OCI-LY7 (cell line): ENCODE measurements at regions of chr5 and their contacts with region 1.

Region 1: GRCh38 chr5:181223058-181223728 is at the start of gene TRIM41:
- DNase-seq: peak; percentile 99
- H3K4me3 ChIP-seq: peak within 1 kb of the TSS; percentile 86
- H3K27ac ChIP-seq: peak within 1 kb of the TSS; percentile 97
- H3K4me1 ChIP-seq: peaks cover 47% of the 10 kb centered on the region
- CTCF ChIP-seq: 0 out of 2 replicates have a peak, but pooled peaks have one; percentile 24
- total RNA-seq, gene TRIM41: 30.2 and 30.4 TPM in 2 replicates

Region 2: GRCh38 chr5:180802325-180803180 is 420.6 kb before region 1 on chr5 and contains the start of gene MGAT1:
- CTCF ChIA-PET with region 1: no interaction called
- POLR2A ChIA-PET with region 1: no interaction called
- intact Hi-C with region 1: loop called (anchors 2 kb)
- DNase-seq: peak; percentile 75
- H3K4me3 ChIP-seq: peak within 1 kb of the TSS; percentile 84
- H3K27ac ChIP-seq: peak within 1 kb of the TSS; percentile 96
- H3K4me1 ChIP-seq: peaks cover 80% of the 10 kb centered on the region
- CTCF ChIP-seq: no peak
- total RNA-seq, gene MGAT1: 65.2 and 75.4 TPM in 2 replicates

Region 3: DNA sequence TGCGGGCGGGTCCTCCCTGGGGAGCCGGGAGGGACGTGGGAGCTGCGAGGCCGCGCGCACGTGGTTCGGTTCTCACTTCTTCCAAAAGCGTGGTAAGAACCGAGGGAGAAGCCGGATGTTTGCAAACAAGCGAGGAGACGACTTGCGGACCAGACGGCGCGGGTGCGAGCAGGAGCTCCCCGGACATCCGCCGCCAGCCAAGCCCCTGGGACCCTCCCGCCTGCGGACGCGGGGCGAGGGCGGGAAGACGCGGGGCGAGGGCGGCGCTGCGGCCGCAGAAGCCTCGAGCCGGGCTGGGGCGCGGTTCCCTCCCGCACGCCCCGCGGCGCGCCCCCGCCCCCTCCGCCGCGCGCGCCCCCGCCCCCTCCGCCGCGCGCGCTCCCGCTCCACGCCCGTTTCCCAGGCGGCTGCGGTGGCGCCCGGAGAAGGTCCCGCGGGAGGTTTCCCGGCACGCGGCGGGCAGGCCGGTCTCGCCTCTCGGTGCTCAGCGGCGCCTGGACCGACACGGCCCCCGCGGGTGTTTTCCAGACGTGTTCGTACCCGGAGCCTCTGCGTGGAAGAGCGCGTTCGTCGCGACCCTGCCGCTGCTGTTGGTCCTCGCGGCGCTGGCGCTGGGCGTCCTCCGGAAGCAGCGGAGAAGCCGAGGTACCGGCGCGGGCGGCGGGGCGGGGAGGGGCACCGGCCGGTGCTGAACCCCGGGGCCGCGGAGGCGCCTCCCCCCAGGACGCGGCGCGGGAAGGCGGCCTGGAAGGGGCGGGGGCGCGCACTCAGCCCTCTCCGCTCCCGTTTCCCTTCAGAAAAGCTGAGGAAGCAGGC is 170.3 kb before region 1 on chr5:
- CTCF ChIA-PET with region 1: no interaction called
- POLR2A ChIA-PET with region 1: no interaction called
- intact Hi-C with region 1: loop called (anchors 2 kb)
- DNase-seq: peak; percentile 86
- H3K4me3 ChIP-seq: peak overlapping the region; percentile 84
- H3K27ac ChIP-seq: peak overlapping the region; percentile 99
- H3K4me1 ChIP-seq: peaks cover 76% of the 10 kb centered on the region
- CTCF ChIP-seq: no peak

Region 4: DNA sequence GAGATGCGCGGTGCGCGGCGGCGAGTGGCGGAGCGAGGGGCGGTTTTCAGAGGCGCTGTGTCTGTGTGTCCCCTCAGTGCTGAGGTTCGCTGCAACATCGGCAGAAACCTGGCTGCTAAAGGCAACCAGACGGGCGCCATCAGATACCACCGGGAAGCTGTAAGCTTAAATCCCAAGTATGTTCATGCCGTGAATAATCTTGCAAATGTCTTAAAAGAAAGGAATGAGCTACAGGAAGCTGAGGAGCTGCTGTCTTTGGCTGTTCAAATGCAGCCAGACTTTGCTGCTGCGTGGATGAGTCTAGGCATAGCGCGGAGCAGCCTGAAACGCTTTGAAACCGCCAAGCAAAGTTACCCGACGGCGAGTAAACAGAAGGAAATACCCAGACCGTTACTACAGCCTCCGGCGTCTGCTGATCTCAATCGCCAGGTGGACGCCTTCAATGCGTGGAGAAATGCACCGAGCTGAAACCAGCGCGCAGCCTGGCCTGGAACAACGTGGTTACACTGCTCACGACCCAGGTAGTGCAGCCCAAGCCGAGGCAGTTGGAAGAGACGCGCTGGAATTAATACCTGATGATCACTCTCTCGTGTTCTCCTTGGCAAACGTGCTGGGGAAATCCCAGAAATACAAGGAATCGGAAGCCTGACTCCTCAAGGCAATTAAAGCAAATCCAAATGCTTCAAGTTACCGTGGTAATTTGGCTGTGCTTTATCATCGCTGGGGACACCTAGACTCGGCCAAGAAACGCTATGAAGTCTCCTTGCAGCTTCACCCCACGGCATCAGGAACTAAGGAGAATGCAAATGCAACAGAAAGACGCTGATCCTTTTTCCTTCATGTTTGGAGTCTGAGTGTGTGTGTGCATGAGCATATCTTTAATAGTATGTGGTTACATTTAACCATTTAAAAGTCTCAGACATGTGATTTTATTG is 108.1 kb before region 1 on chr5:
- CTCF ChIA-PET with region 1: no interaction called
- POLR2A ChIA-PET with region 1: no interaction called
- intact Hi-C with region 1: no loop called
- DNase-seq: no peak
- H3K4me3 ChIP-seq: no peak overlapping the region
- H3K27ac ChIP-seq: no peak overlapping the region
- H3K4me1 ChIP-seq: no peaks in the 10 kb centered on the region
- CTCF ChIP-seq: no peak

Region 5: GRCh38 chr5:181152406-181152805 is 70.8 kb before region 1 on chr5:
- CTCF ChIA-PET with region 1: no interaction called
- POLR2A ChIA-PET with region 1: no interaction called
- intact Hi-C with region 1: no loop called
- DNase-seq: no peak
- H3K4me3 ChIP-seq: no peak overlapping the region
- H3K27ac ChIP-seq: no peak overlapping the region
- H3K4me1 ChIP-seq: peaks cover 25% of the 10 kb centered on the region
- CTCF ChIP-seq: no peak

Region 6: GRCh38 chr5:181184857-181185251 is 38.3 kb before region 1 on chr5:
- CTCF ChIA-PET with region 1: interaction called, 8 read pairs
- POLR2A ChIA-PET with region 1: interaction called, 11 read pairs
- intact Hi-C with region 1: no loop called
- DNase-seq: no peak
- H3K4me3 ChIP-seq: peak overlapping the region; percentile 70
- H3K27ac ChIP-seq: peak overlapping the region; percentile 70
- H3K4me1 ChIP-seq: peaks cover 38% of the 10 kb centered on the region
- CTCF ChIP-seq: no peak

Region 7: GRCh38 chr5:181207214-181208107 is 15.7 kb before region 1 on chr5:
- CTCF ChIA-PET with region 1: interaction called, 5 read pairs
- POLR2A ChIA-PET with region 1: interaction called, 7 read pairs
- intact Hi-C with region 1: loop called (anchors 1 kb)
- DNase-seq: peak; percentile 87
- H3K4me3 ChIP-seq: peak overlapping the region; percentile 79
- H3K27ac ChIP-seq: peak overlapping the region; percentile 59
- H3K4me1 ChIP-seq: peaks cover 29% of the 10 kb centered on the region
- CTCF ChIP-seq: no peak

Region 8: GRCh38 chr5:181260387-181261319 is 37.5 kb after region 1 on chr5 and contains the start of gene TRIM52:
- CTCF ChIA-PET with region 1: no interaction called
- POLR2A ChIA-PET with region 1: interaction called, 20 read pairs
- intact Hi-C with region 1: loop called (anchors 1 kb)
- DNase-seq: peak; percentile 97
- H3K4me3 ChIP-seq: peak within 1 kb of the TSS; percentile 81
- H3K27ac ChIP-seq: peak within 1 kb of the TSS; percentile 77
- H3K4me1 ChIP-seq: peaks cover 28% of the 10 kb centered on the region
- CTCF ChIP-seq: no peak
- total RNA-seq, gene TRIM52: 16.1 and 25.1 TPM in 2 replicates